Upper lobe of right lung (tissue), 1 donor: ENCODE measurements at regions of chr11 and their contacts with region 1.

Region 1: GRCh38 chr11:69101115-69101791 is 52.5 kb downstream of the TPCN2 start:
- DNase-seq: peak; percentile 93
- ATAC-seq: peak; percentile 96
- H3K4me3 ChIP-seq: no peak overlapping the region
- H3K27ac ChIP-seq: no peak overlapping the region
- H3K4me1 ChIP-seq: peaks cover 9% of the 10 kb centered on the region
- H3K27me3 ChIP-seq: peaks cover 11% of the 10 kb centered on the region
- CTCF ChIP-seq: peak; percentile 100

Region 2: GRCh38 chr11:69027704-69028372 is 73.4 kb before region 1 on chr11:
- intact Hi-C with region 1: no loop called
- DNase-seq: peak; percentile 78
- ATAC-seq: peak; percentile 93
- H3K4me3 ChIP-seq: no peak overlapping the region
- H3K27ac ChIP-seq: peak overlapping the region; percentile 42
- H3K4me1 ChIP-seq: peaks cover 10% of the 10 kb centered on the region
- H3K27me3 ChIP-seq: no peaks in the 10 kb centered on the region
- CTCF ChIP-seq: no peak

Region 3: DNA sequence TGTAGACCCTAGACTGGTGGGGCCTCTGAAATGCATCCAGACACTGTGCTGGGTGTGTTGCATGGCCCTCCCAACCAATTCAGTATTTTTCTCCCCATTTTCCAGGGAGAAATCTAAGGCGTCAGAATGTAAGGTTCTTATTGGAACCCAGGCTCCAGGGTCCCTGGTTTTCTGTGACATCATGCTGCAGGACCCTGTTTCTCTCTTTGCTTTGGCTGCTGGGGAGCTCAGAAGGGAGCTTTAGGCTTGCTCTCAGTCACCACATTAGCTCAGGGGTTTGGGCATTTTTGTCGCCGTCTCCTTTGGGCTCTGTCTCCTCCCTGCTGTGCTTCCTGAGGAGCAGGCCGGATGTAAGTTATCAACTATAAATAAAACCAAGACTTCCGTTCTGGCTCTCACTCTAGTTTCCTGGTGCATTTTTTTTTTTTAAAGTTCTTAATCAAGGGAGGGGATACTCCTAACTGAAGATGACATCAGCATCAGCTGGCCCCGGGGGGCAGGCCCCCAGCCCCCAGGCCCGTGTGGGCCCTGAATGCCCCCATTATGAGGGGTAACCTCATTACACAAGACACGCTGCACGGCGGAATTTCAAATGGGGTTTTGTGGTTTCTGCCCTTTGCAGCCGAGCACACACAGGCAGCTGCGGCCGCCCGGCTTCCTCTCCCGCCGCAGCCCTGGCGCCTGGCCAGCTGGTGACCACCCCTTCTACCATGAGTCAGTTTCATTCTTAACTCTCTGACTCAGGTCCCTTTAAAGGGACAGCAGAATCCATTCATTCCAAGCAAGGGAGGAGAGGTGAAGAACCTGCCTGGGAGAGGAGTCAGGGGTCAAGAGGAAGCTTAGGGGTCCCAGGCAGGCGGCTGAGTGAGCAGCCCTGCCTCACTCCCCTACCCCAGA is 195.9 kb after region 1 on chr11:
- intact Hi-C with region 1: loop called (anchors 10 kb)
- DNase-seq: peak; percentile 96
- ATAC-seq: peak; percentile 63
- H3K4me3 ChIP-seq: peak overlapping the region; percentile 23
- H3K27ac ChIP-seq: peak overlapping the region; percentile 89
- H3K4me1 ChIP-seq: peaks cover 43% of the 10 kb centered on the region
- H3K27me3 ChIP-seq: no peaks in the 10 kb centered on the region
- CTCF ChIP-seq: no peak